Tibial artery (tissue), 4 donors: ENCODE measurements at regions of chr2 and their contacts with region 1.

Region 1: GRCh38 chr2:172102391-172103278 is at the start of gene DLX2:
- DNase-seq: peak; percentile 69 to 73
- H3K4me3 ChIP-seq: peak within 1 kb of the TSS; percentile 41 to 54
- H3K27ac ChIP-seq: no peak within 1 kb of the TSS
- H3K4me1 ChIP-seq: peaks cover 0 to 67% (median 58%) of the 10 kb centered on the region in 4 donors
- H3K27me3 ChIP-seq: peaks cover 15 to 100% of the 10 kb centered on the region in 2 donors
- CTCF ChIP-seq: no peak

Region 2: DNA sequence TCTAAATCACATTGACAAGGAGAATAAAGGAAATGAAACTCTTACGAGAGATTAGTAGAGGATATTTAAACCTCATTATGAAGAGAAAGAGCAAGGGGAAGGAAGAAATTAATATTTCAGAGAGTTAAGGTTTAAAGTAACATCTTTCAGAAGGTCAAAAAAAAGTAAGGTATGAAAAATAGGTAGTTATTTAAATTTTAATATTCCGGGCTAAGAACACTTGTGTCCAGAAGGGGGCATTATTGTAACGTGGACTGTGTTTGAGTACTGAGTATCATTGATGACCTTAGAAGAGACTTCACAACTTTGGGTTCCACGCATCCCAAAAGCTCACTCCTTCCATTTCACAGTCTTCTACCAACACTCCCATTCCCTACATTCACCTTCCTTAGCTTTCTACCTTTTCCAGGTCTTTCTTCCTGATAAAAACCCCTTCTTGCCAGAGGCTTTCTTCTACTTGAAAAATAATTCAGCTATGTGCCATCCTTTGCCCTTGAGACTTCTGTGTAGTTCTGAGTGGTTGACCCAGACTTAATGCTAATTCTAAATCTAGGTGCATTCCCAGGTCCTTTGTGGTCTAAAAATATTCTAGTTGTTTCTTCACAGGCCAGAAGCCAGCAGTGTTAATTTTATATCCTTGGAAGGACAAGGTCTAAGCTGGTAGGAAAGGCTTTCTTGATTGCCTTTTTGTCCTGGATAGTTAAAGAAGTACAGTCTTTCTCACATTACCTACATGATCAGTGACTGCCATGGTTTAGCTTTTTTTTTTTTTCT is 398.9 kb before region 1 on chr2:
- intact Hi-C with region 1: loop called (anchors 10 kb)
- DNase-seq: no peak
- H3K4me3 ChIP-seq: no peak overlapping the region
- H3K27ac ChIP-seq: no peak overlapping the region
- H3K4me1 ChIP-seq: peaks cover 0 to 13% (median 7%) of the 10 kb centered on the region in 4 donors
- H3K27me3 ChIP-seq: no peaks in the 10 kb centered on the region
- CTCF ChIP-seq: peak; percentile 10 to 28

Region 3: GRCh38 chr2:171811245-171811628 is 291.4 kb before region 1 on chr2:
- intact Hi-C with region 1: loop called (anchors 10 kb)
- DNase-seq: no peak
- H3K4me3 ChIP-seq: no peak overlapping the region
- H3K27ac ChIP-seq: no peak overlapping the region
- H3K4me1 ChIP-seq: no peaks in the 10 kb centered on the region
- H3K27me3 ChIP-seq: no peaks in the 10 kb centered on the region
- CTCF ChIP-seq: peak; percentile 35 to 41